ENCODE measurements at regions of chr19 and their contacts with region 1.

Region 1: GRCh38 chr19:19821366-19821951 is at the start of gene ZNF506:
- DNase-seq: peak; percentile 91 to 94
- H3K4me3 ChIP-seq: peak within 1 kb of the TSS; percentile 83
- H3K27ac ChIP-seq: peak within 1 kb of the TSS; percentile 66
- H3K4me1 ChIP-seq: peaks cover 5% of the 10 kb centered on the region
- H3K27me3 ChIP-seq: no peaks in the 10 kb centered on the region
- CTCF ChIP-seq: no peak
- total RNA-seq, gene ZNF506: 12.6 and 13.1 TPM in 2 replicates

Region 2: GRCh38 chr19:19361075-19361594 is 460.3 kb before region 1 on chr19:
- CTCF ChIA-PET with region 1: no interaction called
- POLR2A ChIA-PET with region 1: interaction called, 27 read pairs
- intact Hi-C with region 1: no loop called
- DNase-seq: peak; percentile 61 to 72
- H3K4me3 ChIP-seq: no peak overlapping the region
- H3K27ac ChIP-seq: no peak overlapping the region
- H3K4me1 ChIP-seq: peaks cover 10% of the 10 kb centered on the region; the same call in 1 of the 2 replicates
- H3K27me3 ChIP-seq: no peaks in the 10 kb centered on the region
- CTCF ChIP-seq: peak; percentile 92

Region 3: GRCh38 chr19:19663256-19664038 is 158.0 kb before region 1 on chr19 and contains the start of gene ATP13A1:
- CTCF ChIA-PET with region 1: no interaction called
- POLR2A ChIA-PET with region 1: no interaction called
- intact Hi-C with region 1: loop called (anchors 5 kb)
- DNase-seq: peak; percentile 92 to 96
- H3K4me3 ChIP-seq: peak within 1 kb of the TSS; percentile 95
- H3K27ac ChIP-seq: peak within 1 kb of the TSS; percentile 64
- H3K4me1 ChIP-seq: peaks cover 19% of the 10 kb centered on the region
- H3K27me3 ChIP-seq: no peaks in the 10 kb centered on the region
- CTCF ChIP-seq: no peak
- total RNA-seq, gene ATP13A1: 41.1 and 59.7 TPM in 2 replicates

Region 4: GRCh38 chr19:19758164-19758563 is 63.3 kb before region 1 on chr19:
- CTCF ChIA-PET with region 1: no interaction called
- POLR2A ChIA-PET with region 1: no interaction called
- intact Hi-C with region 1: no loop called
- DNase-seq: no peak
- H3K4me3 ChIP-seq: no peak overlapping the region
- H3K27ac ChIP-seq: no peak overlapping the region
- H3K4me1 ChIP-seq: no peaks in the 10 kb centered on the region
- H3K27me3 ChIP-seq: no peaks in the 10 kb centered on the region
- CTCF ChIP-seq: no peak

Region 5: GRCh38 chr19:19873381-19873780 is 51.9 kb after region 1 on chr19:
- CTCF ChIA-PET with region 1: no interaction called
- POLR2A ChIA-PET with region 1: no interaction called
- intact Hi-C with region 1: no loop called
- DNase-seq: no peak
- H3K4me3 ChIP-seq: no peak overlapping the region
- H3K27ac ChIP-seq: no peak overlapping the region
- H3K4me1 ChIP-seq: no peaks in the 10 kb centered on the region
- H3K27me3 ChIP-seq: no peaks in the 10 kb centered on the region
- CTCF ChIP-seq: no peak

Measured in PC-9 (cell line).